ENCODE measurements at regions of chr1 and their contacts with region 1.

Region 1: DNA sequence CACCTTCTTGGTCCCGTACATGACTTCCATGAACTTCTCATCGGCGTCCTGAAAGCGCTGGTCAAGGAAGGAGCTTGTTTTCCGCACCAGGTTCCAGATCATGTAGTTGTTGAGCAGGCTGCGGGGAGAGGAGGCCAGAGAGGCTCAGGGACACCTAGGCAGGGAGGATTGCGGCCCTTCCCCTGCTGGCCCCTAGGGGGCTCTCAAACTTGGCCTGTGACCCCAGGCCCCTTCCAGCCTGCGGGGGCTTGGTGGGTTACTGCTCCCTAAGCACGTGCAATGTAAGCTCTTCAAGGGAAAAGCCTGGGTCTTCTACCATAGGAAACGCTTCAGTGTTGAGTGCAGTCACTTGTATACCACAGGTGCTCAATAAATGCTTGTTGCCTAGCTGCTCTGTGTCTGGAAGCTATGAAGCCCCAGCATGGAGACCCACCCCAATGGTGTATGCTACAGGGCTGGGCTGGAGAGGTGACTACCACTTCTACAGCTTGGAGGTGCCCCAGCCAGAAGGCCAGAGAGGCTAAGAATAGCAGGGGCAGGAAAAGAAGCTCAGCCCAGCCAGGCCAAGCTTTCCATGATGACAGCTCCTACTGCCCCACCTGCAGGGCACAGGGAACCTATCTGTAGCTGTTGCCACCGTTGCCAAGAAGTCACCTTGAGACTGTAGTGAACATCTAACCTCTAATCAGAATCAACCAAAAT is 45.1 kb downstream of the ECE1 start:
- DNase-seq: no peak
- H3K4me3 ChIP-seq: no peak overlapping the region
- H3K27ac ChIP-seq: no peak overlapping the region
- H3K4me1 ChIP-seq: no peaks in the 10 kb centered on the region
- H3K27me3 ChIP-seq: no peaks in the 10 kb centered on the region
- CTCF ChIP-seq: peak; percentile 32 to 59 (median 35)

Region 2: DNA sequence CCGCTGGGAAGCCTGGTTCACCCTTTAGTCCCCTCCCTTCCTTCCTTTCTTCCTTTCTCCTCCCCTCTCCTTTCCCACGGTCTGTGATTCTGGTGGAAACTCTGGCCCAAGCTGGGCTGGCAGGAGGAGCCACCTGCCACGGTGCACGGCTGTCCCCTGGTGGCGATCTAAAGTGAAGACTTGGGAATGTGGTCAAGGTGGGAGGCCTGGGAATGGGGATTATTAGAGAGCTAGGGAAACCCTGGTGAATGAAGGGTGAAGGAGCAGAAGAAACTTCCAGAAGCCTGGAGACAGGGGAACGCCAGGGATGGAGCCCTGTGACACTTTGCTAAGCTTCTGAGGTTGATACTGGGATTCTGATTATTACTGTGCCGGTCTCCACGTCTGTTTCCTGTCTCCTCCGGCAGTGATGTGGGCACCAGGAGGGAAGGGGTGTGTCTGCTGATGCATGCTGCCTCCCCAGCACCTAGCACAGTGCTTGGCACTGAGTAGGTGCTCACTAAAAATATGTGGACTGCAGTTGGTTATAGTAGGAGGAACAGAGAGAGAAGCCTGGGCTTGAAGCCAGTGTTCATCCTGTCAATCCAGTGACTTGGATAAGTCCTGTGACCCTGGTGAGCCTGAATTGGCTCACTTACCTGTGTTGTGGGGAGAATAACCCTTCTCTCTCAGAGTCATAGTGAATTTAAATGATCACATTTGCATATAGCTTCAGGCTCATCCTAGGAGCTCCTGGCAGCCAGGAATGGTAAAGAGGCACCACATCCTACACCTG is 123.6 kb after region 1 on chr1:
- dilution Hi-C with region 1: loop called (anchors 10 kb)
- DNase-seq: no peak
- H3K4me3 ChIP-seq: no peak overlapping the region
- H3K27ac ChIP-seq: no peak overlapping the region
- H3K4me1 ChIP-seq: peaks cover 3% of the 10 kb centered on the region
- H3K27me3 ChIP-seq: no peaks in the 10 kb centered on the region
- CTCF ChIP-seq: peak; percentile 98 to 100 (median 99)

Region 3: GRCh38 chr1:21436488-21437340 is 191.6 kb after region 1 on chr1:
- dilution Hi-C with region 1: no loop called
- DNase-seq: no peak
- H3K4me3 ChIP-seq: peak overlapping the region in 2 of 3 experiments; percentile 7 to 32
- H3K27ac ChIP-seq: no peak overlapping the region
- H3K4me1 ChIP-seq: peaks cover 2% of the 10 kb centered on the region
- H3K27me3 ChIP-seq: no peaks in the 10 kb centered on the region
- CTCF ChIP-seq: no peak

Measured in keratinocyte (primary cell).